ENCODE measurements at regions of chrX and their contacts with region 1.

Region 1: DNA sequence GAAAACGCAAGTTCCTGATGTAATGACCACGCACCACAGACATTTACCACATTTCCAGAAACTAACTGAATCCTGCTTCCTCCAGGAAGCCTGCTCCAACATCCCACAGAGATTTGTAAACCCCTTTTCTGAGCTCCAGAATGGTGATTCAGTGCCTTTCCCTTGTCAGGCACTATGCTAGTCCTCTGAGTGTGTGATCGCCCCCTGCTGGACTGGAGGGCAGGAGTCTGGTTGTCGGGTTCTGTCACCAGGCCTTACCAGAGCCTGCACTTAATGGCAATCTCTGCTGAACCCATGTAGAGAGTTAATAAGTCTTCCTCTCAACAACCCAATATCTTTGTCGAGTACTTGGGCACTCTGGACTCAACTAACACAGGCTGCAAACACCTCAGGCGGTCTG is 14.5 kb upstream of the KDM5C start:
- H3K4me3 ChIP-seq: no peak overlapping the region
- H3K27ac ChIP-seq: no peak overlapping the region
- H3K4me1 ChIP-seq: no peaks in the 10 kb centered on the region
- CTCF ChIP-seq: no peak

Region 2: DNA sequence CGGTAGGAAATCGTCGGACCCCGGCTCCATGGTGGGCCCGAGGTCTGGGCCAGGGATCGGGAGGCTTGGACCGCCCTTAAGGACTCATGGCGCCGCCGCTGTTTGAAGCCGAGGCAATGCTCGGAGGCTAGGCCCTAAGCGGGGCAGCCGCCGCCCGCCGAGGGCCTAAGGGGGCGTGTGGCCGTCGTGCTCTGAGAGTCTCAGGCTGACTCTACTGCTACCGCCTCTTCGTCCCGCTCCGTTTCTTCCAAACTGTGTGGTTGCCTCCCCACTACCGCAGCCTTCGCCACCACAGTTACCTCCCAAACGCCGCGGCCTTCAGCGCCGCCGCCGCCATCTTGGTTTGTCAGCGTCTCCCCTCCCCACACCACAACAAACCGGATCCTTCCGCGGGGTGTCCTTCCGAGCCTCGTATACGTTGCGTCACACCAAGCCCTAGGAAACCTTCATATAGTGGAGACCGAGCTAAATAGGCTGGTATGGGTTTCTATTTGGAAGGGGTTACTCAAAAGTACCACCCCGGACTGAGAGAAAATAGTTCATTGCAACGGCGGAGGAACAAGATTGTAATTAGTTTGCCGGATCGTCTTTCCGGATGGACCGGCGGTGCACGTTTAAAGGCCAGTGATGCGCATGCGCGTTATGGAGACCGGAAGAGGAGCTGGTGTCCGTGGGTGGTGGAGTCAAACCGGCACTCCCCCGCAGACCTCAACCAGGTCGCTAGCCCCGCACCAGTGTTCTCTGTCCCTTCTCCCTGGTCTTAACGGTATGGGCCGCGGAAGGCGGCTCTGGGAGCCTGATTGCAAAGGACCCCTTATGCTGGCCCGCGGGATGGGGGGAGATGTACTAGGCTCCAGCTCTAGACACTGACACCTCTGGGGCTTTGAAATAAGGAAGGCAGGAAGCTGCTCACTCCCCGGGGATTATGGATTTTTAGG is 14.3 kb before region 1 on chrX and contains the start of gene KDM5C:
- CTCF ChIA-PET with region 1: interaction called, 44 read pairs
- POLR2A ChIA-PET with region 1: interaction called, 22 read pairs
- H3K4me3 ChIP-seq: peak within 1 kb of the TSS; percentile 90
- H3K27ac ChIP-seq: peak within 1 kb of the TSS; percentile 96
- H3K4me1 ChIP-seq: peaks cover 19% of the 10 kb centered on the region
- CTCF ChIP-seq: peak; percentile 55; the same call in 1 of the 2 replicates

Region 3: GRCh38 chrX:53251307-53251706 is 11.8 kb after region 1 on chrX:
- CTCF ChIA-PET with region 1: interaction called, 24 read pairs
- POLR2A ChIA-PET with region 1: no interaction called
- H3K4me3 ChIP-seq: no peak overlapping the region
- H3K27ac ChIP-seq: no peak overlapping the region
- H3K4me1 ChIP-seq: no peaks in the 10 kb centered on the region
- CTCF ChIP-seq: no peak

Region 4: DNA sequence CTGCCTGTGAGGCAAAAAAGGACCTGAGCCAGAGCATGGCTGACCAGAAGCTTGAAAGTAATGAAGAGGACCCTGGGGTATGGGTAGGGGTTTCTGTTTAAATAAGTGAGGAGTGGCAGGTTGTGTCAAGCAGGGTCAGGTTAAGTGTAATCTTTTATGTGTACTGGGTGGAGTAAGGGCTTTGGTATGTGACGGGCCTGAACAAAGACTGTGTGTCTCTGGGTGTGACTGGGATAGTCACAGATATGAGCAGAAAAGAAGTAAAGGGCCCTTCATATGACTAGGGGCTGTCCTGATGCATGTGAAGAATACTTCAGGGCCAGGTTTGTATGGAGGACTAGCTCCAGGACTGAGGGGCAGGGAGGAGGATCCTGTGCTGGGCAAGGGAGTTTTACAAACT is 1476.1 kb after region 1 on chrX:
- CTCF ChIA-PET with region 1: no interaction called
- POLR2A ChIA-PET with region 1: no interaction called
- H3K4me3 ChIP-seq: no peak overlapping the region
- H3K27ac ChIP-seq: no peak overlapping the region
- H3K4me1 ChIP-seq: no peaks in the 10 kb centered on the region
- CTCF ChIP-seq: no peak

Measured in HEK293 (cell line).